ENCODE measurements at regions of chr5 and their contacts with region 1.

Region 1: GRCh38 chr5:141968914-141969608 is at the start of gene RNF14:
- DNase-seq: peak; percentile 97
- H3K4me3 Mint-ChIP-seq: peak within 1 kb of the TSS; percentile 97
- H3K27ac Mint-ChIP-seq: peak within 1 kb of the TSS; percentile 96
- H3K4me1 Mint-ChIP-seq: peaks cover 28% of the 10 kb centered on the region
- H3K27me3 Mint-ChIP-seq: no peaks in the 10 kb centered on the region
- total RNA-seq, gene RNF14: 34.6 to 39.5 TPM

Region 2: DNA sequence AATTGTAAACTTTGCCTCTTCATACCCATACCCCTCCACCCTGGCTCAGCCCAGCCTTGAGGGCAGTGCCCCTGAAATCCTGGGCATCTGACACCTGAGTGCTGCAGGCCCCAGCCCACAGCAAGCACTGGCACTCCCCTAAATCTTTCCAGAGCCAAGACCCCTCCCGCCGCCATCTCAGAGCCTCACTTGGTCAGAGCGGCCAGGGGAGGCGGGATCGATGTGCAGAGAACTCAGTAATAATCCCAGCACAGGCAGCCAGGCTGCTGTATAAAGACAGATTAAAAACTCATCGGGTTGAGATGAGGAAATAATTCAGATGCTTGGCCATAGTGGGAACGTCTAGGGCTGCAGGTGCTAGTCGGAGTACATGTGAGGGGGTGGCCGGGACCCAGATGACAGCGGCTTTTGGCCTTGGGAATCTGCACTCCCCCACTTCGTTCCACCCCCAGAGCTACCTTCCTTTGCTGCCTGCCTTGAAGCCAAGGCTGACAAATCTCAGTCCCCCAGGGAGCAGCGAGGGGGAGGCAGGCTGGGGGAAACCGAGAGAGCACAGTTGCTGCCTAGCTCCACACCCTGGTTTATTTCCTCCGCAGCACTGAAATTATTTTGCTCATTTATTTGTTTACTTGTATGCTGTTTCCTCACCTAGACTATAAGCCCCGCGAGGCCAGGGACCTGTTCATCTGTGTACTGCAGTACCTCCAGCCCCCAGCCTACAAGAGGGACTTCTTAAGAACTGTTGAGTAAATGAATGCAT is 267.5 kb before region 1 on chr5:
- CTCF ChIA-PET with region 1: interaction called, 277 read pairs
- POLR2A ChIA-PET with region 1: no interaction called
- intact Hi-C with region 1: no loop called
- DNase-seq: peak; percentile 49
- H3K4me3 Mint-ChIP-seq: peak overlapping the region; percentile 69
- H3K27ac Mint-ChIP-seq: no peak overlapping the region
- H3K4me1 Mint-ChIP-seq: peaks cover 17% of the 10 kb centered on the region
- H3K27me3 Mint-ChIP-seq: peaks cover 9% of the 10 kb centered on the region

Region 3: DNA sequence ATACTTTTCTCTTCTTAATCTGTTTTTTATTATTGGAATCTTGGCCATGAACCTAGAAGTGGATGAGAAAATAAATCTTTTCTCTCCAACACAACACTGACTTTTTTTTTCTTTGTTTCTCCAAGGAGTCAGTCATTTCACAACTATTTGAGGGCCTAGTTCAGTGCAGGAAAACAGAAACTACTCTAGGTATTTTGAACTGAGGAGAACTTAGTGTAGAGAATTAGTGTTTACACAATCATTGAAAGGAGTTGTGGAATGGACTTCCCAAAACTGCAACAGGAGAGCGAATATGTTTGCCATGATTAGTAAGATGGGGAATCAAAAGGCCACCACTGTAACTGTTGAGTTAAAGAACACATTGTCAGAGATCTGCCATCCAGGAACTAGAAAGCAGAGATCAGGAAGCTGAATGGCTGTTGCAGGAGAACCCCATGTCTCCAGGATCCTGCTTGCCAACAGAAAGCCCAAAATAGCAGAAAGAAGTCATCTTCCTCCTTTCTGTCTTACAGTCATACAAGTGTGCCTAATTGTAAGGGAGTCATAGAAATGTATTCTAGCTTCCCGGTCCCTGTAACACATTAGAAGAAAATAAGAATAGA is 70.5 kb before region 1 on chr5:
- CTCF ChIA-PET with region 1: no interaction called
- POLR2A ChIA-PET with region 1: no interaction called
- intact Hi-C with region 1: no loop called
- DNase-seq: no peak
- H3K4me3 Mint-ChIP-seq: no peak overlapping the region
- H3K27ac Mint-ChIP-seq: no peak overlapping the region
- H3K4me1 Mint-ChIP-seq: no peaks in the 10 kb centered on the region
- H3K27me3 Mint-ChIP-seq: peaks cover 7% of the 10 kb centered on the region

Region 4: DNA sequence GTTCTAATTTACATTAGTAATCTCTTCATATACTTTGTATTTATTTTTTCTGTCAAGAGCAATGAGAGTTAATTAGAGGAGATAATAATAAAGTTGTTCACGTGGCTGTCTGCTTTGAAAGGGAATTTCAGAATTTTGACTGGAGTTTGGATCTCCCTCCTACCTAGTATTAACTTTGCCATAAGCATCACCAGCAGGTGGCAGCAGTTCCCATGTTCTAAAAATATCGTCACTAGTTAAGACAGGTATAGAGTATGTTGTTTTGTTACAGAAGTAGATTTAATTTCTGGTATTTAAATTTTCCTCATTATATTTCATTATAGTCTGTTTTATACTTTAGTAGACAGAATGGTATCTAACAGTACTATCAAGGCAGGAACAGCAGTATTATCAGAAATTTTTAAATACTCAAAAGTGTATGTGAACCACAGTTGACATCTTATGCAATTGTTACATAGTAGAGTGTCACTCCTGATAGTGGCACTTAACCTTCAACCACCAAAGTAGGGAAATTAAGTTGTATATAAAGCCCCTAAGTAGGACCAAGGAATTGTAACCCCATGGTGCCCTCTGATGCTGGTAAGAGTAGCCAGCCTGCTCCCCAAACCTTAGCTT is 23.4 kb after region 1 on chr5:
- CTCF ChIA-PET with region 1: interaction called, 27 read pairs
- POLR2A ChIA-PET with region 1: no interaction called
- intact Hi-C with region 1: no loop called
- DNase-seq: peak; percentile 84
- H3K4me3 Mint-ChIP-seq: no peak overlapping the region
- H3K27ac Mint-ChIP-seq: no peak overlapping the region
- H3K4me1 Mint-ChIP-seq: no peaks in the 10 kb centered on the region
- H3K27me3 Mint-ChIP-seq: no peaks in the 10 kb centered on the region

Region 5: GRCh38 chr5:142046191-142046590 is 77.1 kb after region 1 on chr5:
- CTCF ChIA-PET with region 1: no interaction called
- POLR2A ChIA-PET with region 1: no interaction called
- intact Hi-C with region 1: no loop called
- DNase-seq: no peak
- H3K4me3 Mint-ChIP-seq: no peak overlapping the region
- H3K27ac Mint-ChIP-seq: no peak overlapping the region
- H3K4me1 Mint-ChIP-seq: no peaks in the 10 kb centered on the region
- H3K27me3 Mint-ChIP-seq: no peaks in the 10 kb centered on the region

Region 6: GRCh38 chr5:142095651-142096330 is 126.7 kb after region 1 on chr5:
- CTCF ChIA-PET with region 1: interaction called, 3 read pairs
- POLR2A ChIA-PET with region 1: interaction called, 6 read pairs
- intact Hi-C with region 1: loop called (anchors 5 kb)
- DNase-seq: peak; percentile 93
- H3K4me3 Mint-ChIP-seq: peak overlapping the region; percentile 48
- H3K27ac Mint-ChIP-seq: peak overlapping the region; percentile 95
- H3K4me1 Mint-ChIP-seq: peaks cover 63% of the 10 kb centered on the region
- H3K27me3 Mint-ChIP-seq: no peaks in the 10 kb centered on the region

Region 7: GRCh38 chr5:142287096-142287972 is 318.3 kb after region 1 on chr5:
- CTCF ChIA-PET with region 1: no interaction called
- POLR2A ChIA-PET with region 1: no interaction called
- intact Hi-C with region 1: no loop called
- DNase-seq: no peak
- H3K4me3 Mint-ChIP-seq: no peak overlapping the region
- H3K27ac Mint-ChIP-seq: no peak overlapping the region
- H3K4me1 Mint-ChIP-seq: peaks cover 3% of the 10 kb centered on the region
- H3K27me3 Mint-ChIP-seq: no peaks in the 10 kb centered on the region